Left cardiac atrium (tissue), 4 donors: ENCODE measurements at regions of chr5 and their contacts with region 1.

Region 1: GRCh38 chr5:124948062-124948753 is 201.8 kb upstream of the ZNF608 start:
- DNase-seq: peak; percentile 28
- ATAC-seq: peak; percentile 19 to 47

Region 2: DNA sequence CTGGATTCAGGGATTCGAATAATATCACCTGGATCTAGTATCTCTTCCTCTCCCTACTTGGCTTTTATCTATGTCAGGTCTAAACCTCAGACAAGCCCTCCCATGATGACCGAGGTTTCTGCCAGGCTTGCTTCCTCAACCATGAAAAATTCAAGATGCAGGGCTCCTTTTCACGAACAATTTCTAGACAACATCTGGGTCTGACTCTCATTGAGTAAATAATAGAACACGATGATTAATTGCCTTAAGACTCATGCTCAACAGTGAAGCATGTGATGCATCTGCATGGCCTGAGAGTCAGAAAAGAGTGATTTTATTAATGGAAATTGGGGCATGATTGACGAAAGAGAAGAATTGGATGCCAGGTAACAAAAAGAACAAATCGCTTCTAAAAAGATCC is 75.5 kb after region 1 on chr5:
- intact Hi-C with region 1: loop called in 1 of 2 experiments (anchors 2 kb)
- DNase-seq: no peak
- ATAC-seq: no peak

Region 3: DNA sequence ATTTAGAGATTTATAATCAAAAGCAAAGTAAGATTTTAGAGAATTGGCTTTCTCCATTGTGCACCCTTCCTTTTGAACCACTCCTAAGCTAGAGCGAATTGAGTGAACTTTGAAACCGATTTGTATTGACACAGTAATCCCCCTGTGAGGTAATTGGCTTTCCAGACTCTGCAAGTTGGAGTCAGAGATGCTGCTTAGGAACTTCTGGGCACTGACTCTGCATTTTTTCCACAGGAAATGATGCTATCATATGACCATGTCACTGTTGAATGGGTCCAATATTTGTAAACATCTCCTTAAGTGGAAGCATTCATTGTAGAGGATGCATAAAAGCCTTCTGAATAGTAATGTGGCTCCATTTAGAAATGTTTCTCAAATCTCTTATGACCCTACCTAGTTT is 192.6 kb after region 1 on chr5:
- intact Hi-C with region 1: no loop called
- DNase-seq: no peak
- ATAC-seq: peak; percentile 39 to 78